ENCODE measurements at regions of chr2 and their contacts with region 1.

Region 1: GRCh38 chr2:24827321-24828237 is 34.4 kb downstream of the CENPO start:
- DNase-seq: peak; percentile 89
- CTCF ChIP-seq: peak; percentile 90

Region 2: DNA sequence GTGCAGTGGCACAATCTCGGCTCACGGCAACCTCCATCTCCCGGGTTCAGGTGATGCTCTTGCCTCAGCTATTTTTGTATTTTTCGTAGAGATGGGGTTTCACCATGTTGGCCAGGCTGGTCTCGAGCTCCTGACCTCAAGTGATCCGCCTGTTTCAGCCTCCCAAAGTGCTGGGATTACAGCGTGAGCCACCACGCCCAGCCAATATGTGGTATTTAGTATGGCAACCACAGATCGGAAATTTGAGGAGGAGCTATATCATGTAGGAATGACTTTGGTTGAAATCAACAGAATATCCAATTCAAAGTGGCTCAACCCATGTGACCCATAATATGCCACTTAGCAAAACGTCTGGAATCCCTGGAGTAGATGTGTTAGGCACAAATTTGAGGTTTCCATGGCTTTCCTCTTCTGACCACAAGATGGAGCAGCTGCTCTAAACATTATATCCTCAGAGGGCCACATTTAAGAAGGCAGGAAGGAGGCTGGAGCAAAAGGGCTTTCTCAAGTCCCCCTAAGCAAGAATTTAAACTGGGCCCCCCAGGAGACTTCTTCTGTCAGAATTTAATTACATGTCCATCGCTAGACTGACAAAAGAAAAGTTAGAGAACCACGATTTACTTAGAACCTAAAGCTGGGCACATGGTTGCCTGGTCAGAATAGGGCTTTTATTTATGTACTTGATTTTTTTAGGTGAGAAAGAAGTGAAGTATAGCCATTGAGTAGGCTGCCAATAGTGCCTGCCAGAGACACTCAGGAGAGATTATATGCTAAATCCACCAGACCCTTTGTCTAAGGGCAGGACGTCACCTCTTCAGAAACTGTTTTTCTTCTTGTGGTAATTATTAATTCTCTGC is 417.7 kb before region 1 on chr2:
- in situ Hi-C with region 1: loop called (anchors 10 kb)
- DNase-seq: peak; percentile 78
- CTCF ChIP-seq: peak; percentile 81

Region 3: DNA sequence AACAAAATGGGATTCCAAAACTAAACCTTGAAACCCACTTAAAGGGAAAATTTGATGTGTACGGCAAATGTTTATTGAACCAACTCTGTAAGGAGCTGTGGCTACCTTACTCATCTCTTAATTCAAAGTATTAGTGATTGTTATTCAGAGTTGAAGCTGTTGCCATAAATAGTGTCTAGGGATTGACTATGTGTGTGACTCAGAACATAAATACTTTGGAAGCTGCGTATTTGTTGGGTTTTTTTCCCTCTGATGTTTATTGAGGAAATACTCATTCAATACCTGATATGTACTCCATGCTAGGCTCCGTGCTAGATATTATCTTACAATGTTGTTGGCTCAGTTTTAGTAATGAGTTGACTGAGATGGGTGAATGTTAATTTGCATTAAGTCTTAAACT is 124.8 kb before region 1 on chr2:
- in situ Hi-C with region 1: no loop called
- DNase-seq: no peak
- CTCF ChIP-seq: no peak

Measured in GM13977 (cell line).